ENCODE measurements at regions of chr22 and their contacts with region 1.

Region 1: GRCh38 chr22:46533434-46533833 is 4.0 kb downstream of the CELSR1 start:
- DNase-seq: no peak
- ATAC-seq: no peak

Region 2: GRCh38 chr22:46362203-46362933 is 171.1 kb before region 1 on chr22:
- intact Hi-C with region 1: loop called in 1 of 2 experiments (anchors 5 kb)
- DNase-seq: no peak
- ATAC-seq: no peak